ENCODE measurements at regions of chr12 and their contacts with region 1.

Region 1: DNA sequence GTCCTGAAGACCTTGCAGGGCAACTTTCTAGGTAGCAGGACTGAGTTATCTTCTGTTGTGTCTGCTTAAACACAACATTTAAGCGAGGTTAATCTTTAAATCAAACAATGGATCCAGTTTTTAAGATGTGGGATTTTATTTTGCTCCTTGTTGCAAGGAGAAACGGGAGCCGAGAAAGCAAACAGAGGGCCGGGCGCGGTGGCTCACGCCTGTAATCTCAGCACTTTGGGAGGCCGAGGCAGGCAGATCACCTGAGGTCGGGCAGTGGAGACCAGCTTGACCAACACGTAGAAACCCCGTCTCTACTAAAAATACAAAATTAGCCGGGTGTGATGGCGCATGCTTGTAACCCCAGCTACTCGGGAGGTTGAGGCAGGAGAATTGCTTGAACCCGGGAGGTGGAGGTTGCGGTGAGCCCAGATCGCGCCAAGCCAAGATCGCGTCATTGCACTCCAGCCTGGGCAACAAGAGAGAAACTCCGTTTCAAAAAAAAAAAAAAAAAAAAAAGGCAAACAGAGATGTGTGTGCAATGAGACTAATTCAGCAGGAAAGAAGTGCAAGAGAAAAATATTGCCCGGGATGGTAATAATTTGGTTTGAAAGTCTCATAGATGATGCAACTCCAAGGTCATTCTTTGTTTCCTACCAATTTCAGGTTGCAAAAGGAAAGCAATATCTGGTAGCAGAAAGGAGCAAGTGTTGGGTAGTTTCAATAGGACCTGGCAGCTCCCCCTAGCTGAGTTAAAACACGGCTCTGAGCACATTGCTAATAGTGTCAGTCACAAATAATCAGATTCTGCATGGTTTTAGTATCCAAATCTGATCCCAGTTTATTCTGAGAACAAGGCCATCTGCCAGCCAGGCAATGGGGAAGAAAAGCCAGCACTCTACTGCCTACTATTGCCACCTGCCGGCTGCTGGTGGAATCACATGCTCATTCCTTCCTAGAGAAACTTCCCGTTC is 141.4 kb downstream of the PPM1H start:
- DNase-seq: peak; percentile 60
- ATAC-seq: peak; percentile 78
- H3K4me3 ChIP-seq: no peak overlapping the region
- H3K27ac ChIP-seq: no peak overlapping the region
- H3K4me1 ChIP-seq: peaks cover 2 to 9% of the 10 kb centered on the region in 2 experiments; a peak in 2 of 4 replicates
- H3K27me3 ChIP-seq: no peaks in the 10 kb centered on the region
- CTCF ChIP-seq: peak; percentile 87 to 94 (median 91)
- POLR2A ChIP-seq: no peak
- RAD21 ChIP-seq: peak; percentile 98

Region 2: GRCh38 chr12:62435303-62436163 is 358.0 kb before region 1 on chr12:
- CTCF ChIA-PET with region 1: interaction called, 42 read pairs
- POLR2A ChIA-PET with region 1: no interaction called
- RAD21 ChIA-PET with region 1: interaction called, 5 to 6 read pairs
- intact Hi-C with region 1: loop called (anchors 1 kb)
- DNase-seq: no peak
- ATAC-seq: no peak
- H3K4me3 ChIP-seq: no peak overlapping the region
- H3K27ac ChIP-seq: no peak overlapping the region
- H3K4me1 ChIP-seq: no peaks in the 10 kb centered on the region
- H3K27me3 ChIP-seq: no peaks in the 10 kb centered on the region
- CTCF ChIP-seq: no peak
- POLR2A ChIP-seq: no peak
- RAD21 ChIP-seq: no peak

Region 3: GRCh38 chr12:62581288-62582064 is 212.1 kb before region 1 on chr12:
- CTCF ChIA-PET with region 1: interaction called, 79 read pairs
- POLR2A ChIA-PET with region 1: no interaction called
- RAD21 ChIA-PET with region 1: interaction called, 6 read pairs
- intact Hi-C with region 1: loop called (anchors 1 kb)
- DNase-seq: peak; percentile 38
- ATAC-seq: peak; percentile 84
- H3K4me3 ChIP-seq: no peak overlapping the region
- H3K27ac ChIP-seq: no peak overlapping the region
- H3K4me1 ChIP-seq: no peaks in the 10 kb centered on the region
- H3K27me3 ChIP-seq: no peaks in the 10 kb centered on the region
- CTCF ChIP-seq: peak; percentile 67 to 73 (median 73); a peak in 5 of 6 replicates
- POLR2A ChIP-seq: no peak
- RAD21 ChIP-seq: peak; percentile 79

Region 4: GRCh38 chr12:62603061-62603810 is 190.3 kb before region 1 on chr12:
- CTCF ChIA-PET with region 1: interaction called, 6 read pairs
- POLR2A ChIA-PET with region 1: interaction called, 7 read pairs
- RAD21 ChIA-PET with region 1: no interaction called
- intact Hi-C with region 1: loop called (anchors 1 kb)
- DNase-seq: peak; percentile 51
- ATAC-seq: peak; percentile 85
- H3K4me3 ChIP-seq: peak overlapping the region; percentile 72 to 79
- H3K27ac ChIP-seq: peak overlapping the region; percentile 99
- H3K4me1 ChIP-seq: peaks cover 11 to 36% of the 10 kb centered on the region in 2 experiments
- H3K27me3 ChIP-seq: no peaks in the 10 kb centered on the region
- CTCF ChIP-seq: peak in 1 of 3 experiments; percentile 25; a peak in 2 of 6 replicates
- POLR2A ChIP-seq: peak; percentile 43
- RAD21 ChIP-seq: peak; percentile 63

Region 5: DNA sequence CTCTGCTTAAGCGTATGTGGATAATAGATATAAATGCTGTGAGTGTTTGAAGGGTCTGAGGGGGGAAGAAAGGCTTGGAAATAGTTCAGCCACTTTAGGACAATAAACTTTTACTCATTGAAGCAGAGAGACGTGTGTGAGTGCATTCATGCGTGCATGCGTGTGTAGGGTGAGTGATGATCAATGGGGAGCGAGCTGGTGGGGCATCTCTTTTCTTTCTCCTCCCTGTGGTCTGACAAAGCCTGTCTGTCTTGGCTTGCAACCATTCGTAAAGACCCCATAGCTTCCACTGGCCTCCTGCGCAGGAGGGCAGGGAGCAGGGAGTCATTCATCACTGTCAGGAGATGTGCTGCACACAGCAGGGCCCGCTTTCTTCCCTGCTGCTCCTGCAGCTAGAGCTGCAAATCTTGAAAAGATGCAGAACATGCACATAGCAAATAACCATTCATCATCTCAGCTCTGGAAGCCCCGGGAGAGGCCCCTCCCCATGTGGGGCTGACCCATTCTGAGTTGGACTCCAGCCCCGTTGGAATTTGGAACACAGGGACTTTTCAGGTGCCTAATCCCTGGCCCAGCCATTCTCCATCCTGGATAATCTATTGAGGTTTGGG is 81.8 kb before region 1 on chr12:
- CTCF ChIA-PET with region 1: no interaction called
- POLR2A ChIA-PET with region 1: no interaction called
- RAD21 ChIA-PET with region 1: no interaction called
- intact Hi-C with region 1: no loop called
- DNase-seq: no peak
- ATAC-seq: no peak
- H3K4me3 ChIP-seq: no peak overlapping the region
- H3K27ac ChIP-seq: no peak overlapping the region
- H3K4me1 ChIP-seq: peaks cover 3 to 14% of the 10 kb centered on the region in 2 experiments
- H3K27me3 ChIP-seq: no peaks in the 10 kb centered on the region
- CTCF ChIP-seq: no peak
- POLR2A ChIP-seq: no peak
- RAD21 ChIP-seq: no peak

Region 6: GRCh38 chr12:62724947-62725447 is 68.5 kb before region 1 on chr12:
- CTCF ChIA-PET with region 1: interaction called, 4 read pairs
- POLR2A ChIA-PET with region 1: no interaction called
- RAD21 ChIA-PET with region 1: interaction called in 1 of 2 experiments, 5 read pairs
- intact Hi-C with region 1: loop called (anchors 2 kb)
- DNase-seq: peak; percentile 99
- ATAC-seq: peak; percentile 93
- H3K4me3 ChIP-seq: peak overlapping the region in 1 of 2 experiments; percentile 48; a peak in 2 of 4 replicates
- H3K27ac ChIP-seq: peak overlapping the region; percentile 85
- H3K4me1 ChIP-seq: peaks cover 60 to 80% of the 10 kb centered on the region in 2 experiments
- H3K27me3 ChIP-seq: no peaks in the 10 kb centered on the region
- CTCF ChIP-seq: no peak
- POLR2A ChIP-seq: no peak
- RAD21 ChIP-seq: peak; percentile 43; the same call in 1 of the 2 replicates

Region 7: GRCh38 chr12:63955831-63956609 is 1162.5 kb after region 1 on chr12:
- CTCF ChIA-PET with region 1: no interaction called
- POLR2A ChIA-PET with region 1: no interaction called
- RAD21 ChIA-PET with region 1: no interaction called
- intact Hi-C with region 1: no loop called
- DNase-seq: no peak
- ATAC-seq: no peak
- H3K4me3 ChIP-seq: no peak overlapping the region
- H3K27ac ChIP-seq: no peak overlapping the region
- H3K4me1 ChIP-seq: no peaks in the 10 kb centered on the region
- H3K27me3 ChIP-seq: no peaks in the 10 kb centered on the region
- CTCF ChIP-seq: no peak
- POLR2A ChIP-seq: no peak
- RAD21 ChIP-seq: no peak

Measured in HCT116 (cell line).